Endothelial cell of umbilical vein (primary cell): ENCODE measurements at regions of chrX and their contacts with region 1.

Region 1: DNA sequence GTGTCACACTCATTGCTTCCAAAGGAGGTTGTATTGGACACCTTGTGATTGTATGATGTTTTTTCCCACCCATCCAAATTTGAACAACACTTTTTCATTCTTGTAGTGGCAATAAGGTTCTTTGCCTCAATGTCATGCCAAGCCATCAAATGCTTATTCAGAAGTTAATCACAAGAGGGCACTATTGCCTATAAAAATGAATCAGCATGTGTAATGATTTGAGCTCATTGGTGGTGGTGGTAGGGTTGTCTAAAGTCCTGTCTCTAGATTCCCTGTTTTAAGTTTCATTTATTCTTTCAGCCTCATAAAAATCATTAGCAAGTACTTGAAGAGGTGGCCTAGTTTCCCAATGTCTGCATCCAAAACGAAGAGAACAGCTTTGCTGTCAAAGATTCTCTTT is 37.0 kb downstream of the IRS4 start:
- DNase-seq: peak; percentile 42
- H3K4me3 ChIP-seq: no peak overlapping the region
- H3K27ac ChIP-seq: no peak overlapping the region
- H3K4me1 ChIP-seq: no peaks in the 10 kb centered on the region
- H3K27me3 ChIP-seq: no peaks in the 10 kb centered on the region
- CTCF ChIP-seq: peak; percentile 7 to 21
- POLR2A ChIP-seq: no peak

Region 2: GRCh38 chrX:107826238-107827029 is 872.9 kb before region 1 on chrX:
- CTCF ChIA-PET with region 1: no interaction called
- POLR2A ChIA-PET with region 1: no interaction called
- dilution Hi-C with region 1: no loop called
- intact Hi-C with region 1: no loop called
- DNase-seq: peak; percentile 36
- H3K4me3 ChIP-seq: peak overlapping the region; percentile 50 to 76 (median 54)
- H3K27ac ChIP-seq: peak overlapping the region; percentile 76
- H3K4me1 ChIP-seq: peaks cover 14% of the 10 kb centered on the region
- H3K27me3 ChIP-seq: no peaks in the 10 kb centered on the region
- CTCF ChIP-seq: no peak
- POLR2A ChIP-seq: peak; percentile 2

Region 3: DNA sequence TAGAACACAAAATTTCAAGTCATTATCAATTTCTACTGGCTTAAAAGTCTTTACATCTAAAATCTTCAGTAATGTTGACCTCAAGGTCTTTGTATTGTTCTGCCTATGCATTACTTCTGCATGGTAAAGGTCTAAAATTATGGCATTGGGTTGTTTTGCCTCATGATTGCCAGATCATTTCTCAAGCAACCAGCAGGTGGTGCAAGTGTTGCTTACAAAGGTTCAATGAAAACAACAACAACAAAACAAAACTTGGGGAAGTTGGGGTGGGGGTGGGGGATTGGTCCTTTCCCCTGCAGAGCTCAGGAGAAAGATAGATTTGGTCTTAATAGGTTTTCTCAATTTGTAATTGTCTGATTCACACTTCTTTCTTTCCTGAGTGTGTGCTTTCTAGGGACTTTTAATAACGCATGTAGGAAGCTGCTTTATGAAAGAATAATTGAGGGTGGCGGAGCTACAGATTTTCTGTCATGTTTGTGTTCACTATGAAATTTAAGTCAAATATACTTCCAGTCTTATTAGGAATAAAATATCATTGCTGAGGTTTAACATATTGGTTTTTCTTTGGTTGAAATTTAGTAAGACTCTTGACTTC is 114.7 kb before region 1 on chrX:
- CTCF ChIA-PET with region 1: interaction called, 4 read pairs
- POLR2A ChIA-PET with region 1: interaction called, 10 read pairs
- dilution Hi-C with region 1: no loop called
- intact Hi-C with region 1: loop called (anchors 5 kb)
- DNase-seq: peak; percentile 7
- H3K4me3 ChIP-seq: no peak overlapping the region
- H3K27ac ChIP-seq: no peak overlapping the region
- H3K4me1 ChIP-seq: no peaks in the 10 kb centered on the region
- H3K27me3 ChIP-seq: no peaks in the 10 kb centered on the region
- CTCF ChIP-seq: peak in 1 of 2 donors; percentile 21
- POLR2A ChIP-seq: no peak

Region 4: DNA sequence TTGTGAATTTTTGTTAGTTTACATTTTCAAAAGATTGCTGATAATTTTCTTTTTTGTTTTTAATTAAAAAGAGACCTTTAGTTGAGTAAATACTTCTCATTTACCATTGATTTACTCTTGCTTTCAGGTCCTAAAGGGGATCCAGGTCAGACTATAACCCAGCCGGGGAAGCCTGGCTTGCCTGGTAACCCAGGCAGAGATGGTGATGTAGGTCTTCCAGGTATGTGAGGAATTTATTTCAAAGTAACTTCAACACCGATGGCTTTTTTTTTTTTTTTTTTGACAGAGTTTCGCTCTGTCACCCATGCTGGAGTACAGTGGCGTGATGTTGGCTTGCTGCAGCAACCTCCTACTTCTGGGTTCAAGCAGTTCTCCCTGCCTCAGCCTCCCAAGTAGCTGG is 98.1 kb before region 1 on chrX:
- CTCF ChIA-PET with region 1: no interaction called
- POLR2A ChIA-PET with region 1: no interaction called
- dilution Hi-C with region 1: no loop called
- intact Hi-C with region 1: no loop called
- DNase-seq: no peak
- H3K4me3 ChIP-seq: no peak overlapping the region
- H3K27ac ChIP-seq: no peak overlapping the region
- H3K4me1 ChIP-seq: no peaks in the 10 kb centered on the region
- H3K27me3 ChIP-seq: no peaks in the 10 kb centered on the region
- CTCF ChIP-seq: no peak
- POLR2A ChIP-seq: no peak

Region 5: DNA sequence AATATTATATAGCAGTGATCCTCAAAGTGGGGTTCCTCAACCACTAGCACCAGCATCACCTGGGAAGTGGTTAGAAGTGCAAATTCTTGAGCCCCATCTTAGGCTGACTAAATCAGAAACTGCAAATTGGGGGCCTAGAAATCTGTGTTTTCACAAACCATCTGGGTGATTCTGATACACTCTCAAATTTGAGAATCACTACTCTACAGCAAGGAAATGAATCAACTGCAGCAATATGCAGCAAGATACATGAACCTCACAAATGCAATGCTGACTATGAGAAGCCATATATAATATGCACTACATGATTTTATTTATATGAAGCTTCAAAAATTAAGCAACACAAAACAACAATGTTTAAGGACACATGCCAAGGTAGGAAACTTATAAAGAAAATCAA is 73.2 kb after region 1 on chrX:
- CTCF ChIA-PET with region 1: no interaction called
- POLR2A ChIA-PET with region 1: no interaction called
- dilution Hi-C with region 1: no loop called
- intact Hi-C with region 1: no loop called
- DNase-seq: no peak
- H3K4me3 ChIP-seq: no peak overlapping the region
- H3K27ac ChIP-seq: no peak overlapping the region
- H3K4me1 ChIP-seq: no peaks in the 10 kb centered on the region
- H3K27me3 ChIP-seq: no peaks in the 10 kb centered on the region
- CTCF ChIP-seq: no peak
- POLR2A ChIP-seq: no peak

Region 6: DNA sequence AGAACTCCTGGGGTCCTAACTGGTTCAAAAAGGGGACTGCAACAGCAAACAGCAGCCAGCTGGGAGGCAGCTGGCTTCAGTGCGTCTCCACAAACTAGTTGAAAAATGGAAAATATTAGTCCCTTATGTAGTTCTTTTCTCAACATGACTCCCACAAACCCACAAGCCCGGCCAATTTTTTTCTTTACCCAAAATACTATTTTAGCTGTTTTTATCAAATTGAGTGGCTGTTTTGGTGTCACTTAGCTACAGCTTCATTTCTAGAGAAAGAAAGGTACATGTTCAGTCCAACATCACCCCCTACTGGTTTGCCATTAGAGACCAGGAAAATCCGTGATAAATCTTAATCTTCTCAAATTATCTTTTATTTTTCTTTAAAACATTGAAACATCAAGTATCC is 685.3 kb after region 1 on chrX:
- CTCF ChIA-PET with region 1: interaction called, 250 read pairs
- POLR2A ChIA-PET with region 1: no interaction called
- dilution Hi-C with region 1: no loop called
- intact Hi-C with region 1: loop called (anchors 1 kb)
- DNase-seq: peak; percentile 28
- H3K4me3 ChIP-seq: no peak overlapping the region
- H3K27ac ChIP-seq: no peak overlapping the region
- H3K4me1 ChIP-seq: no peaks in the 10 kb centered on the region
- H3K27me3 ChIP-seq: peaks cover 0 to 1% of the 10 kb centered on the region in 2 experiments
- CTCF ChIP-seq: peak; percentile 10 to 29
- POLR2A ChIP-seq: no peak

Region 7: GRCh38 chrX:109485470-109486340 is 786.3 kb after region 1 on chrX:
- CTCF ChIA-PET with region 1: interaction called, 10 read pairs
- POLR2A ChIA-PET with region 1: no interaction called
- dilution Hi-C with region 1: no loop called
- intact Hi-C with region 1: no loop called
- DNase-seq: peak; percentile 77
- H3K4me3 ChIP-seq: no peak overlapping the region
- H3K27ac ChIP-seq: no peak overlapping the region
- H3K4me1 ChIP-seq: no peaks in the 10 kb centered on the region
- H3K27me3 ChIP-seq: peaks cover 5 to 6% of the 10 kb centered on the region in 2 experiments
- CTCF ChIP-seq: peak; percentile 71 to 83
- POLR2A ChIP-seq: no peak